GM12878 (cell line): ENCODE measurements at regions of chr12 and their contacts with region 1.

Region 1: GRCh38 chr12:47882781-47883546 is 21.8 kb downstream of the VDR start:
- DNase-seq: peak; percentile 77
- ATAC-seq: peak; percentile 73
- H3K4me3 ChIP-seq: peak overlapping the region; percentile 48; the same call in 1 of the 2 replicates
- H3K27ac ChIP-seq: peak overlapping the region; percentile 67
- H3K4me1 ChIP-seq: peaks cover 53% of the 10 kb centered on the region
- H3K27me3 ChIP-seq: no peaks in the 10 kb centered on the region
- CTCF ChIP-seq: no peak
- EP300 ChIP-seq: peak; percentile 89 to 92
- POLR2A ChIP-seq: peak; percentile 43; the same call in 1 of the 2 replicates
- RAD21 ChIP-seq: no peak

Region 2: DNA sequence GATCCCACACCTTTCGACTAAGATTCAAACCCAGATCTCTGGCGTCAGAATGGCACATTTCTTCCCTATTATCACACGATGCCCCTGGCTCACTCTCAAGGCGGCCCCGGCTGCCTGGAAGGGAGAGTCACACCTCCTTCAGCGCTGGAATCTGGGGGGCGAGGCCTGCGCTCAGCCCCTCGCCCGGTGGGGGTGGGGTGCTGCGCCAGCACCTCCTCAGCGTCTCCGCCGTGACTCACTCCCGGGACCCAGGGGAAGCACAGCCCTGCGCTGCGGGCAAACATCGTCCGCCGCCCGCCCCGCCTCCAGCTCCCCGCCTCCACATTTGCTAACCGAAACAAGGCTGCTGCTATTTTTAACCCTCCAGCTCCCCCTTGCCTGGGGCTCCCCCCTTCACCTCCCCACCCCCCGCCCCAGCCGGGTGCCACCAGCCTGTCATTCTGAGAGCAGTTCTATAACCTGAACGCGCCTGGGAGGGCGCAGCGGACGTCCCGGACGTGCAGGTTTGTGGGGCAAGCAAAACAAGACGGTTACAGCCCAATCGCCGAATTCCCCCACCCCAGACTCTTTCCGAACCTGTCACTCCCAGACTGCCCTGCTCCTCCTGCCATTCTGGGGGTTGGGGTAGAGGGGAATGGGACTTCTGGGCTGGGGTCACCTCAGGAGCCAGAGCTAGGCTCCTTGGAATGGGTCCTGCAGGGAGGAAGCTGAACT is 70.0 kb before region 1 on chr12:
- CTCF ChIA-PET with region 1: interaction called, 12 read pairs
- POLR2A ChIA-PET with region 1: interaction called, 12 read pairs
- RAD21 ChIA-PET with region 1: interaction called, 14 read pairs
- SMC1A ChIA-PET with region 1: interaction called, 11 read pairs
- in situ Hi-C with region 1: no loop called
- intact Hi-C with region 1: no loop called
- DNase-seq: peak; percentile 73
- ATAC-seq: peak; percentile 83
- H3K4me3 ChIP-seq: peak overlapping the region; percentile 75
- H3K27ac ChIP-seq: peak overlapping the region; percentile 85
- H3K4me1 ChIP-seq: peaks cover 80% of the 10 kb centered on the region
- H3K27me3 ChIP-seq: no peaks in the 10 kb centered on the region; a peak in 2 of 4 replicates
- CTCF ChIP-seq: peak in 1 of 3 experiments; percentile 25; a peak in 2 of 6 replicates
- EP300 ChIP-seq: peak; percentile 16 to 31; a peak in 1 of 4 replicates
- POLR2A ChIP-seq: peak; percentile 88
- RAD21 ChIP-seq: peak; percentile 35; the same call in 1 of the 2 replicates

Region 3: GRCh38 chr12:47828608-47829536 is 54.1 kb before region 1 on chr12:
- CTCF ChIA-PET with region 1: no interaction called
- POLR2A ChIA-PET with region 1: interaction called, 8 read pairs
- RAD21 ChIA-PET with region 1: interaction called, 25 read pairs
- SMC1A ChIA-PET with region 1: interaction called, 10 read pairs
- in situ Hi-C with region 1: no loop called
- intact Hi-C with region 1: no loop called
- DNase-seq: no peak
- ATAC-seq: no peak
- H3K4me3 ChIP-seq: no peak overlapping the region
- H3K27ac ChIP-seq: no peak overlapping the region
- H3K4me1 ChIP-seq: peaks cover 42% of the 10 kb centered on the region
- H3K27me3 ChIP-seq: no peaks in the 10 kb centered on the region; a peak in 1 of 4 replicates
- CTCF ChIP-seq: no peak
- EP300 ChIP-seq: no peak
- POLR2A ChIP-seq: no peak
- RAD21 ChIP-seq: no peak

Region 4: GRCh38 chr12:47870175-47870781 is 12.7 kb before region 1 on chr12:
- CTCF ChIA-PET with region 1: interaction called, 94 read pairs
- POLR2A ChIA-PET with region 1: interaction called, 27 read pairs
- RAD21 ChIA-PET with region 1: interaction called, 44 read pairs
- SMC1A ChIA-PET with region 1: interaction called, 118 read pairs
- in situ Hi-C with region 1: no loop called
- intact Hi-C with region 1: no loop called
- DNase-seq: peak; percentile 43
- ATAC-seq: peak; percentile 76
- H3K4me3 ChIP-seq: no peak overlapping the region
- H3K27ac ChIP-seq: 0 out of 2 replicates have a peak overlapping the region, but pooled peaks have one; percentile 4
- H3K4me1 ChIP-seq: peaks cover 31% of the 10 kb centered on the region
- H3K27me3 ChIP-seq: no peaks in the 10 kb centered on the region
- CTCF ChIP-seq: peak; percentile 22 to 62 (median 53); a peak in 5 of 6 replicates
- EP300 ChIP-seq: no peak
- POLR2A ChIP-seq: no peak
- RAD21 ChIP-seq: peak; percentile 51

Region 5: GRCh38 chr12:47896633-47897032 is 13.7 kb after region 1 on chr12:
- CTCF ChIA-PET with region 1: interaction called, 28 read pairs
- POLR2A ChIA-PET with region 1: interaction called, 9 read pairs
- RAD21 ChIA-PET with region 1: interaction called, 28 read pairs
- SMC1A ChIA-PET with region 1: interaction called, 40 read pairs
- in situ Hi-C with region 1: no loop called
- intact Hi-C with region 1: no loop called
- DNase-seq: no peak
- ATAC-seq: no peak
- H3K4me3 ChIP-seq: no peak overlapping the region
- H3K27ac ChIP-seq: no peak overlapping the region
- H3K4me1 ChIP-seq: peaks cover 20% of the 10 kb centered on the region
- H3K27me3 ChIP-seq: no peaks in the 10 kb centered on the region
- CTCF ChIP-seq: no peak
- EP300 ChIP-seq: no peak
- POLR2A ChIP-seq: no peak
- RAD21 ChIP-seq: no peak

Region 6: GRCh38 chr12:47904713-47905310 is 21.8 kb after region 1 on chr12 and contains the start of gene VDR:
- CTCF ChIA-PET with region 1: interaction called, 28 read pairs
- POLR2A ChIA-PET with region 1: interaction called, 7 read pairs
- RAD21 ChIA-PET with region 1: interaction called, 28 read pairs
- SMC1A ChIA-PET with region 1: interaction called, 21 read pairs
- in situ Hi-C with region 1: no loop called
- intact Hi-C with region 1: no loop called
- DNase-seq: no peak
- ATAC-seq: peak; percentile 85
- H3K4me3 ChIP-seq: peak within 1 kb of the TSS; percentile 84
- H3K27ac ChIP-seq: no peak within 1 kb of the TSS
- H3K4me1 ChIP-seq: peaks cover 30% of the 10 kb centered on the region
- H3K27me3 ChIP-seq: peaks cover 4 to 5% of the 10 kb centered on the region in 2 experiments; a peak in 1 of 4 replicates
- CTCF ChIP-seq: peak in 2 of 3 experiments; percentile 4 to 34; a peak in 2 of 6 replicates
- EP300 ChIP-seq: no peak
- POLR2A ChIP-seq: peak; percentile 69
- RAD21 ChIP-seq: no peak
- polyA plus RNA-seq, gene VDR: 0.27 to 0.75 TPM

Region 7: GRCh38 chr12:47949441-47950308 is 66.7 kb after region 1 on chr12:
- CTCF ChIA-PET with region 1: interaction called, 11 read pairs
- POLR2A ChIA-PET with region 1: no interaction called
- RAD21 ChIA-PET with region 1: interaction called, 7 read pairs
- SMC1A ChIA-PET with region 1: interaction called, 5 read pairs
- in situ Hi-C with region 1: no loop called
- intact Hi-C with region 1: no loop called
- DNase-seq: no peak
- ATAC-seq: peak; percentile 93
- H3K4me3 ChIP-seq: no peak overlapping the region
- H3K27ac ChIP-seq: no peak overlapping the region
- H3K4me1 ChIP-seq: no peaks in the 10 kb centered on the region
- H3K27me3 ChIP-seq: 0 out of 4 replicates have a peak, but pooled peaks cover 0 to 5% of the 10 kb centered on the region in 2 experiments
- CTCF ChIP-seq: peak; percentile 75 to 89 (median 87)
- EP300 ChIP-seq: no peak
- POLR2A ChIP-seq: no peak
- RAD21 ChIP-seq: peak; percentile 76